IMR-90 (cell line): ENCODE measurements at regions of chr2 and their contacts with region 1.

Region 1: GRCh38 chr2:191758518-191759507 is 80.9 kb downstream of the NABP1 start:
- DNase-seq: peak; percentile 57
- ATAC-seq: peak; percentile 96
- H3K4me3 ChIP-seq: no peak overlapping the region
- H3K27ac ChIP-seq: no peak overlapping the region
- H3K4me1 ChIP-seq: no peaks in the 10 kb centered on the region
- H3K27me3 ChIP-seq: peaks cover 17% of the 10 kb centered on the region
- CTCF ChIP-seq: peak; percentile 56
- POLR2A ChIP-seq: no peak
- RAD21 ChIP-seq: peak; percentile 43

Region 2: GRCh38 chr2:191701696-191702095 is 57.1 kb before region 1 on chr2:
- CTCF ChIA-PET with region 1: no interaction called
- POLR2A ChIA-PET with region 1: no interaction called
- dilution Hi-C with region 1: no loop called
- in situ Hi-C with region 1: no loop called
- intact Hi-C with region 1: no loop called
- DNase-seq: no peak
- ATAC-seq: no peak
- H3K4me3 ChIP-seq: no peak overlapping the region
- H3K27ac ChIP-seq: no peak overlapping the region
- H3K4me1 ChIP-seq: no peaks in the 10 kb centered on the region
- H3K27me3 ChIP-seq: no peaks in the 10 kb centered on the region
- CTCF ChIP-seq: no peak
- POLR2A ChIP-seq: no peak
- RAD21 ChIP-seq: no peak

Region 3: GRCh38 chr2:191789796-191790195 is 31.0 kb after region 1 on chr2:
- CTCF ChIA-PET with region 1: no interaction called
- POLR2A ChIA-PET with region 1: no interaction called
- dilution Hi-C with region 1: no loop called
- in situ Hi-C with region 1: no loop called
- intact Hi-C with region 1: loop called (anchors 5 kb)
- DNase-seq: peak; percentile 71
- ATAC-seq: peak; percentile 61
- H3K4me3 ChIP-seq: no peak overlapping the region
- H3K27ac ChIP-seq: no peak overlapping the region
- H3K4me1 ChIP-seq: peaks cover 4% of the 10 kb centered on the region; the same call in 1 of the 2 replicates
- H3K27me3 ChIP-seq: peaks cover 2% of the 10 kb centered on the region; the same call in 1 of the 2 replicates
- CTCF ChIP-seq: no peak
- POLR2A ChIP-seq: no peak
- RAD21 ChIP-seq: no peak